ENCODE measurements at regions of chr13 and their contacts with region 1.

Region 1: GRCh38 chr13:20495082-20496023 is 30.3 kb downstream of the CRYL1 start:
- DNase-seq: peak; percentile 53 to 68
- H3K4me3 ChIP-seq: no peak overlapping the region
- H3K4me3 Mint-ChIP-seq: no peak overlapping the region
- H3K27ac Mint-ChIP-seq: no peak overlapping the region
- H3K4me1 ChIP-seq: no peaks in the 10 kb centered on the region
- H3K4me1 Mint-ChIP-seq: no peaks in the 10 kb centered on the region
- H3K27me3 ChIP-seq: no peaks in the 10 kb centered on the region
- H3K27me3 Mint-ChIP-seq: no peaks in the 10 kb centered on the region
- CTCF ChIP-seq: peak; percentile 90 to 97

Region 2: DNA sequence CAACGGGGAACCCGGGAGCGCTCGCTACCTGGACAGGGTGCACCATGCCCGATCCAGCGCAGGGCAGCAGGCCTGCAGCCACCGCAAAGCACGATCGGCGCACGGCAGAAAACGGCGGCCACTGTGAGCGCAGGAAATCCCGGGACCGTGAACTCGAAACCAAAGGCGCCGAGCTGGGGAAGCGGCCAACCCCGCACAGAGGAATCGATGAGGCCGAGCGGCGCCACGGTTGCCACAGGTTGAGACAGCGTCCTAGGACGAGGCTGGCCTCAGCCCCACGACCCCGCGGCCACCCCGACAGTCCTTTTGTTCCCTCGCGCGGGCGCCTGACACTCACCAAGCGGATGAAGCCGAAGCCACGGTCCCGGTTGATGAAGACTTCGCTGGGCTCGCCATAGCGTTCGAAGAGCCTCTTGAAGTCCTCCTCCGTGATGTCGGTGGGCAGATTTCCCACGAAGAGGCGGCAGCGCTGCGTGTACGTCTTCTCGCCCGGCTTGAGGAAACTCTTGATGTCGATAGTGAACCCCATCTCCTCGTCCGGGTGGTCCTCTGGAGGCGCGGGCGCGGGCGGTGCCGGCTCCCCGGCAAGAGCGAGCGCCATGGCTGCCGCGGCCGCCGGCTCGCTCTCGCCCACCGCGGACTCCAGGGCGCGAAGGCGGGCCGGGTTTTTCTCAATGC is 713.2 kb before region 1 on chr13:
- CTCF ChIA-PET with region 1: no interaction called
- POLR2A ChIA-PET with region 1: no interaction called
- intact Hi-C with region 1: no loop called
- DNase-seq: peak; percentile 43 to 60
- H3K4me3 ChIP-seq: peak overlapping the region; percentile 81
- H3K4me3 Mint-ChIP-seq: peak overlapping the region; percentile 94
- H3K27ac Mint-ChIP-seq: peak overlapping the region; percentile 93
- H3K4me1 ChIP-seq: no peaks in the 10 kb centered on the region
- H3K4me1 Mint-ChIP-seq: peaks cover 8% of the 10 kb centered on the region
- H3K27me3 ChIP-seq: no peaks in the 10 kb centered on the region
- H3K27me3 Mint-ChIP-seq: no peaks in the 10 kb centered on the region
- CTCF ChIP-seq: no peak

Region 3: GRCh38 chr13:19959831-19960652 is 535.3 kb before region 1 on chr13:
- CTCF ChIA-PET with region 1: no interaction called
- POLR2A ChIA-PET with region 1: no interaction called
- intact Hi-C with region 1: no loop called
- DNase-seq: peak; percentile 91 to 94
- H3K4me3 ChIP-seq: peak overlapping the region; percentile 91
- H3K4me3 Mint-ChIP-seq: peak overlapping the region; percentile 99
- H3K27ac Mint-ChIP-seq: peak overlapping the region; percentile 96
- H3K4me1 ChIP-seq: peaks cover 5% of the 10 kb centered on the region
- H3K4me1 Mint-ChIP-seq: peaks cover 7% of the 10 kb centered on the region
- H3K27me3 ChIP-seq: no peaks in the 10 kb centered on the region
- H3K27me3 Mint-ChIP-seq: no peaks in the 10 kb centered on the region
- CTCF ChIP-seq: peak; percentile 79 to 93

Region 4: GRCh38 chr13:20301403-20302071 is 193.8 kb before region 1 on chr13:
- CTCF ChIA-PET with region 1: no interaction called
- POLR2A ChIA-PET with region 1: no interaction called
- intact Hi-C with region 1: no loop called
- DNase-seq: no peak
- H3K4me3 ChIP-seq: no peak overlapping the region
- H3K4me3 Mint-ChIP-seq: no peak overlapping the region
- H3K27ac Mint-ChIP-seq: no peak overlapping the region
- H3K4me1 ChIP-seq: peaks cover 6% of the 10 kb centered on the region
- H3K4me1 Mint-ChIP-seq: no peaks in the 10 kb centered on the region
- H3K27me3 ChIP-seq: peaks cover 4% of the 10 kb centered on the region
- H3K27me3 Mint-ChIP-seq: peaks cover 9% of the 10 kb centered on the region
- CTCF ChIP-seq: no peak

Region 5: GRCh38 chr13:20550799-20551198 is 55.4 kb after region 1 on chr13:
- CTCF ChIA-PET with region 1: no interaction called
- POLR2A ChIA-PET with region 1: no interaction called
- intact Hi-C with region 1: loop called (anchors 1 kb)
- DNase-seq: no peak
- H3K4me3 ChIP-seq: no peak overlapping the region
- H3K4me3 Mint-ChIP-seq: no peak overlapping the region
- H3K27ac Mint-ChIP-seq: no peak overlapping the region
- H3K4me1 ChIP-seq: peaks cover 7% of the 10 kb centered on the region
- H3K4me1 Mint-ChIP-seq: no peaks in the 10 kb centered on the region
- H3K27me3 ChIP-seq: no peaks in the 10 kb centered on the region
- H3K27me3 Mint-ChIP-seq: no peaks in the 10 kb centered on the region
- CTCF ChIP-seq: no peak

Region 6: DNA sequence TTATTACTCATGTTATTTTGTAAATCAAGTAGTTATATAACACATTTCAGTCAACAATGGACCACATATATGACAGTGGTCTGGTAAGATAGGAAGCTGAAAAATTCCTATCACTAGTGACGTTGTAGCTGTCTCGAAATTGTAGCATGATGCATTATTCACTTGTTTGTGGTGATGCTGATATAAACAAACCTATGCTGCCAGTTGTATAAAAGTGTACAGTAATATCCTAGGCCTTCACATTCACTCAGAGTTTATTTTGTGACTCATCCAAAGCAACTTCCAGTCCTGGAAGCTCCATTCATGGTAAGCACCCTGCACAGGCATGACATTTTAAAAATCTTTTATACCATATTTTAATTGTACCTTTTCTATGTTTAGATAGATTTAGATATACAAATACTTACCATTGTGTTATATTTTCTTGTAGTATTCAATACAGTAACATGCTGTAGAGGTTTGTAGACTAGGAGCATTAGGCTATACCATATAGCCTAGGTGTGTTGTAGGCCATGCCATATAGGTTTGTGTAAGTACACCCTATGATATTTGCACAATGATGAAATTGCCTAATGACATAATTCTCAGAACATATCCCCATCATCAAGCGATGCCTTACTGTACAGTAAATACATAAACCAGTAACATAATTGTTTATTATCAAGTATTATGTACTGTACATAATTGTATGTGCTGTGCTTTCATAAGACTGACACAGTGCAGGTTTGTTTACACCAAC is 120.9 kb after region 1 on chr13:
- CTCF ChIA-PET with region 1: no interaction called
- POLR2A ChIA-PET with region 1: no interaction called
- intact Hi-C with region 1: loop called (anchors 10 kb)
- DNase-seq: no peak
- H3K4me3 ChIP-seq: no peak overlapping the region
- H3K4me3 Mint-ChIP-seq: no peak overlapping the region
- H3K27ac Mint-ChIP-seq: no peak overlapping the region
- H3K4me1 ChIP-seq: no peaks in the 10 kb centered on the region
- H3K4me1 Mint-ChIP-seq: no peaks in the 10 kb centered on the region
- H3K27me3 ChIP-seq: no peaks in the 10 kb centered on the region
- H3K27me3 Mint-ChIP-seq: no peaks in the 10 kb centered on the region
- CTCF ChIP-seq: no peak

Region 7: GRCh38 chr13:20773194-20774080 is 278.1 kb after region 1 on chr13 and contains the start of gene EEF1AKMT1:
- CTCF ChIA-PET with region 1: no interaction called
- POLR2A ChIA-PET with region 1: no interaction called
- intact Hi-C with region 1: loop called (anchors 5 kb)
- DNase-seq: peak; percentile 95 to 98
- H3K4me3 ChIP-seq: peak within 1 kb of the TSS; percentile 58
- H3K4me3 Mint-ChIP-seq: peak within 1 kb of the TSS; percentile 87
- H3K27ac Mint-ChIP-seq: peak within 1 kb of the TSS; percentile 97
- H3K4me1 ChIP-seq: peaks cover 9% of the 10 kb centered on the region
- H3K4me1 Mint-ChIP-seq: peaks cover 16% of the 10 kb centered on the region
- H3K27me3 ChIP-seq: no peaks in the 10 kb centered on the region
- H3K27me3 Mint-ChIP-seq: no peaks in the 10 kb centered on the region
- CTCF ChIP-seq: no peak
- total RNA-seq, gene EEF1AKMT1: 8.6 and 9.6 TPM in 2 replicates

Region 8: GRCh38 chr13:20924758-20925394 is 429.5 kb after region 1 on chr13:
- CTCF ChIA-PET with region 1: interaction called, 15 read pairs
- POLR2A ChIA-PET with region 1: no interaction called
- intact Hi-C with region 1: loop called (anchors 1 kb)
- DNase-seq: peak; percentile 87 to 88
- H3K4me3 ChIP-seq: no peak overlapping the region
- H3K4me3 Mint-ChIP-seq: no peak overlapping the region
- H3K27ac Mint-ChIP-seq: no peak overlapping the region
- H3K4me1 ChIP-seq: no peaks in the 10 kb centered on the region
- H3K4me1 Mint-ChIP-seq: peaks cover 9% of the 10 kb centered on the region
- H3K27me3 ChIP-seq: no peaks in the 10 kb centered on the region
- H3K27me3 Mint-ChIP-seq: no peaks in the 10 kb centered on the region
- CTCF ChIP-seq: peak; percentile 78 to 91

Region 9: GRCh38 chr13:21202764-21203538 is 707.6 kb after region 1 on chr13:
- CTCF ChIA-PET with region 1: no interaction called
- POLR2A ChIA-PET with region 1: no interaction called
- intact Hi-C with region 1: no loop called
- DNase-seq: no peak
- H3K4me3 ChIP-seq: no peak overlapping the region
- H3K4me3 Mint-ChIP-seq: no peak overlapping the region
- H3K27ac Mint-ChIP-seq: no peak overlapping the region
- H3K4me1 ChIP-seq: no peaks in the 10 kb centered on the region
- H3K4me1 Mint-ChIP-seq: peaks cover 7% of the 10 kb centered on the region
- H3K27me3 ChIP-seq: no peaks in the 10 kb centered on the region
- H3K27me3 Mint-ChIP-seq: no peaks in the 10 kb centered on the region
- CTCF ChIP-seq: no peak